OCI-LY7 (cell line): ENCODE measurements at regions of chr3 and their contacts with region 1.

Region 1: DNA sequence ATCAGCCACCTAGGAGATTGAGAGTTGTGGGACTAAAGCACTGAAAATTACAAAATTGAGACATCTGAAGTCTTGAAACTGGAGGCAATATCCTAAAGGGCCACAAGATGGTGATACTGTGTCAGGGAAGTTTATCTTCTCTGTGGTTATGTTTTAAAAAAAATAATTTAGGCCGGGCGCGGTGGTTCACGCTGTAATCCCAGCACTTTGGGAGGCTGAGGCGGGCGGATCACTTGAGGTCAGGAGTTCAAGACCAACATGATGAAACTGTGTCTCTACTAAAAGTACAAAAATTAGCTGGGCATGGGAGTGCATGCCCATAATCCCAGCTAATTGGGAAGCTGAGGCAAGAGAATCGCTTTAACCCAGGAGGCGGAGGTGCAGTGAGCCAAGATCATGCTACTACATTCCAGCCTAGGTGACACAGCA is 17.9 kb upstream of the NIT2 start:
- DNase-seq: peak; percentile 64
- H3K4me3 ChIP-seq: no peak overlapping the region
- H3K27ac ChIP-seq: no peak overlapping the region
- H3K4me1 ChIP-seq: no peaks in the 10 kb centered on the region
- CTCF ChIP-seq: peak; percentile 83

Region 2: DNA sequence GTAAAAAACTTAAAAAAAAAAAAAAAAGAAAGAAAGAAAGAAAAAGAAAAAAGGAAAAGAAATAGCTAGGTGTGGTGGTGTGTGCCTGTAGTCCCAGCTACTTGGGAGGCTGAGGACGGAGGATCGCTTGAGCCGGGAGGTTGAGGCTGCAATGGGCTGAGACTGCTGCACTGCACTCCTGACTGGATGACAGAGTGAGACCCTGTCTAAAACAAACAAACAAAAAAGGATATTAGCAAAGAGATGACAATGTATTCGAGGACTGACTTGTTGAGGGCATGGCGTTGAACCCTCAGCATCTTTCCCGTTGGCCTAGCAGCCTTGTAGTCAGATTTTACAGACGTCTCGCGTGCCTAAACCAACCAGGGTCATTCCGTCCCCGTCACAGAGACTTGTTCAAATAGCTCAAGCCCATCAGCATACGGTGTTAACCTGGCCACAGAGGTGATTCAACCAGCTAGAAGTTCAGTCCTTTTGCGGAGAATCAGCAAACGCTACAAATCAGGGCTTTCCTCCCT is 17.4 kb after region 1 on chr3:
- CTCF ChIA-PET with region 1: no interaction called
- POLR2A ChIA-PET with region 1: no interaction called
- intact Hi-C with region 1: no loop called
- DNase-seq: no peak
- H3K4me3 ChIP-seq: peak overlapping the region; percentile 85
- H3K27ac ChIP-seq: no peak overlapping the region
- H3K4me1 ChIP-seq: peaks cover 9% of the 10 kb centered on the region
- CTCF ChIP-seq: no peak

Region 3: GRCh38 chr3:100370756-100371155 is 54.1 kb after region 1 on chr3:
- CTCF ChIA-PET with region 1: no interaction called
- POLR2A ChIA-PET with region 1: interaction called, 10 read pairs
- intact Hi-C with region 1: no loop called
- DNase-seq: no peak
- H3K4me3 ChIP-seq: no peak overlapping the region
- H3K27ac ChIP-seq: no peak overlapping the region
- H3K4me1 ChIP-seq: no peaks in the 10 kb centered on the region
- CTCF ChIP-seq: no peak